ENCODE measurements at regions of chr14 and their contacts with region 1.

Region 1: GRCh38 chr14:81269100-81269978 is 48.6 kb upstream of the GTF2A1 start:
- DNase-seq: no peak
- ATAC-seq: peak; percentile 76

Region 2: DNA sequence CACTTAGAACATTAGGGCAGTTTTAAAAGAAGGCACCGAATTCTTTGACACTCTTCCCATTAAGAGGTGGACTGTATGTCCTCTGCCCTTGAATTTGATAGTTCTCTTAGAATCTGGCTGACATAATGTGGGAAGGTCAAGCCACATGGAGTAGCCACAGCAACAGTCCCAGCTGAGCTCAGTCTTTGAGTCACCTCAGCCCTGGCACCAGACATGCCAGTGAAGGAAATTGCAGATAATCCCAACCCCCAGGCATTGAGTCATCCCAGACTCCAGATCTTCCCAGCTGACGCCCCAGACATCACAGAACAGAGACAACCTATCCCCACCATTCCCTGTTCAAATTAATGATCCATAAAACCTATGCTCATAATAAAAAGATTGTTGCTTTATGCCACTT is 132.0 kb before region 1 on chr14:
- intact Hi-C with region 1: no loop called
- DNase-seq: no peak
- ATAC-seq: no peak

Region 3: DNA sequence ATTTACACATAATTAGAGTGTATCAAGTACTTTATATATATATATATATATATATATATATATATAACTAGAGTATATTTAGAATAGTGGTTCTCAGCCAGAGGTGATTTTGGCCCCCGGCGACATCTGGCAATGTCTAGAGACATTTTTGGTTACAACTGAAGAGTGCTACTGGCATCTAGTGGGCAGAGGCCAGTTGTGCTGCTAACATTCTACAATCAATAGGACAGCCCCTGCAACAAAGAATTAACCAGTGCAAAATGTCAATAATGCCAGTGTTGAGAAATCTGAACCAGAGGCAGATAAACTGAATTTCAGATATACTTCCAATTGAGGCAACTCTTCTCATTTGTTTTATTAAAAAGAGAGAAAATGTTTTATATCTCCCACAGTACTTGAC is 57.5 kb before region 1 on chr14:
- intact Hi-C with region 1: no loop called
- DNase-seq: peak; percentile 61
- ATAC-seq: peak; percentile 88

Region 4: GRCh38 chr14:81416194-81416952 is 147.0 kb after region 1 on chr14:
- intact Hi-C with region 1: no loop called
- DNase-seq: no peak
- ATAC-seq: peak; percentile 60

Region 5: GRCh38 chr14:81453166-81453766 is 183.9 kb after region 1 on chr14:
- intact Hi-C with region 1: loop called (anchors 5 kb)
- DNase-seq: peak; percentile 40
- ATAC-seq: no peak

Region 6: DNA sequence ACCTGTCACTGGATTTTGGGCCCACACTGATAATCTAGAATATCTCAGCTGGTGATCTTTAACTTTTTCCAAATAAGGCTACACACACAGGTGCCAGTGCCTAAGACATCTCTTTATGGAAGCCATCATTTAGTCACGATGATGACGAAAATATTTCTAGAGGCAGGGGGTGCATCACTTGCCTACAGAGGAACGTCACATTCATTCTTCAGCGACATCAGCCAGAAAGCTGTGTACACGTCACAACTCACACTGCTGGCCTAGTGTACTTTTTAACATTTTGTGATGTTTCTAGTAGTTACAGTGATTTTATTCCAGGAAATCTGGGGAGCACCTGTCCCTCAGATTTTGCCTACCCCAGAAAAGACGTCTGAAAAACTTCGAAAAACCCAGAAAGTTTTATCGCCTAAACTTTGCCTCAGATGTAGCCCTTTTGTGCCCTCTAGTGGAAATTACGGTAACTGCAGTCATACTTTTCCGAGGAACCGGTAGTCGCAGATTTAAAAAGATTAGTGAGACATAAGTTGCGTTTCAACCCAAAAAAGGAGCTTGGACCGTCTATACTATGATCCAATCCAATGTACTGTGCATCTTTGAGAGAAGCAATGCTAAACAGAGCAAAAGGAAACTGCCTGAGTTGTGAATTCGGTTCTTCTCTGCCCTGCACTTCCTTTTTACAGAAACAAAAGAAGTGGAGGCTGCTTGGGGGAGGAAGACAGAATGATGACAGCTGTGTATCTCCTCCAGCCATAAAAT is 195.1 kb after region 1 on chr14:
- intact Hi-C with region 1: loop called (anchors 5 kb)
- DNase-seq: no peak
- ATAC-seq: peak; percentile 55

Region 7: DNA sequence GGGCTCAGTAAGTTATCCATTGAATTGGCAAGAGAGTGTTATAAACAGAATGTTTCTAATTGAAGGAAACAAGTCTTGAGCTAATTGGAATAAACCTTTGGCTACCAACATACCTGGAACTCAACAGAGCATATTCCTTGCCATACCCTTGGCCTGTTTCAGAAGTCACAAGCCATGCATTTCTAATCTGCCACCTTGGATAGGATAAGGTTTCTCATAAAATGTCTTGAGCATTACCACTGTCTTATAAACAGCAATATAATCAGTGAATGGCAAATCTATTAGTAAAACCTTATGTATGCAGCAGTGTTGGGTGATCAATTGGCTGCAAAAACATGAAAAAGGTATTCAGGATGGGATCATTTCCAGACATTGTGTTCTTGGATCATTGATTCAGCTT is 1029.5 kb after region 1 on chr14:
- intact Hi-C with region 1: no loop called
- DNase-seq: no peak
- ATAC-seq: no peak